CD4-positive, alpha-beta T cell (primary cell): ENCODE measurements at regions of chr16 and their contacts with region 1.

Region 1: GRCh38 chr16:15055141-15056053 is 477 bp downstream of the NTAN1 start:
- DNase-seq: peak in 11 of 14 experiments; percentile 20 to 88 (median 68)
- ATAC-seq: peak; percentile 67
- H3K4me3 ChIP-seq: peak overlapping the region; percentile 98
- H3K4me3 Mint-ChIP-seq: peak overlapping the region; percentile 94
- H3K27ac ChIP-seq: peak overlapping the region in 1 of 2 donors; percentile 38
- H3K27ac Mint-ChIP-seq: peak overlapping the region; percentile 81
- H3K4me1 ChIP-seq: peaks cover 22% of the 10 kb centered on the region
- H3K4me1 Mint-ChIP-seq: peaks cover 24% of the 10 kb centered on the region
- H3K27me3 ChIP-seq: no peaks in the 10 kb centered on the region
- H3K27me3 Mint-ChIP-seq: no peaks in the 10 kb centered on the region
- CTCF ChIP-seq: peak; percentile 25

Region 2: DNA sequence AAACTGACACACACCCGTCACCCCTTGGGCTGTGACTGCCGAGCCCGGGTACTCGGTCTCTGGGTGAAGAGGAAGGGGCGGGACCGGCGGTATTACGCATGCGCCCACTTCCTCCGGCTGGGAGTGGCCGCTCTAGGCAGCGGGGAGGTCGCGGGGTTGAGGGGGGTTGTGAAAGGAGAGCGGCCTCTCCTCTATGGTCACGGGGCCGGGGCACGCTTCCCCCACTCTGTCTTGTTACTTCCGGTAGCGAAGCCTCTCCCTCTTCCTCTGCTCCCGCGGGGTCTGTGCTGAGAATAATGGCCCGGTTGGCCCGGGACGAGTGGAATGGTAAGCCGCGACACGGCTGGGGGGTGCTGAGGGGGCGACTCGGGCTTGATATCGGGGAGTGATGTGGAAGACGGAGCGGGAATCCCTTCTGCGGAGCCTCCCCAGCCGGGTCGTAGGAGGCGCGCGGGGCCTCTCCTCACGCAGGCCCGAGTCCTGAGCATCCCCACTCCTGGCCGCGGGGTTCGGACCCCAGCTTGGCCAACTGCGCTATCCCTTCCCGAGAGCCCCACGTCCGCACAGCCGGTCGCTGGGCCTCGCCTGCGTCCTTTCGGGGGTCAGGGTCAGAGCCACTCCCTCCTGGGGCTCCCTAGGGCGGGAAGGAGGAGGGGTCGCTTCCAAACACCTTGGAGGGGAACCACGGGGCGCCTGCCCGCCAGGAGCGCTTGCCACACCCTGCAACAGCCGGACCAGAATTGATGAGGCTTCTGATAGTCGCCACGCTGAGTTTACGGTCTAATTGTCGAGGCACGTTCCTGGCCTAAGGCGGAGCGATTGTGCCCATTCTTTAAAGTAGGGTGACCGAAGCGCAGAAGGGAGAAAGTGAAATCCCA is 422.5 kb before region 1 on chr16 and contains the start of gene BFAR:
- CTCF ChIA-PET with region 1: no interaction called
- POLR2A ChIA-PET with region 1: no interaction called
- intact Hi-C with region 1: loop called in 1 of 2 experiments (anchors 10 kb)
- DNase-seq: peak; percentile 98 to 100 (median 99)
- ATAC-seq: peak; percentile 70
- H3K4me3 ChIP-seq: peak within 1 kb of the TSS; percentile 98
- H3K4me3 Mint-ChIP-seq: peak within 1 kb of the TSS; percentile 100
- H3K27ac ChIP-seq: peak within 1 kb of the TSS; percentile 82 to 92
- H3K27ac Mint-ChIP-seq: peak within 1 kb of the TSS; percentile 93
- H3K4me1 ChIP-seq: peaks cover 65% of the 10 kb centered on the region
- H3K4me1 Mint-ChIP-seq: peaks cover 64% of the 10 kb centered on the region
- H3K27me3 ChIP-seq: no peaks in the 10 kb centered on the region
- H3K27me3 Mint-ChIP-seq: no peaks in the 10 kb centered on the region
- CTCF ChIP-seq: no peak
- total RNA-seq, gene BFAR: 36.9 to 37.6 TPM

Region 3: GRCh38 chr16:14658063-14658462 is 397.3 kb before region 1 on chr16:
- CTCF ChIA-PET with region 1: no interaction called
- POLR2A ChIA-PET with region 1: no interaction called
- intact Hi-C with region 1: no loop called
- DNase-seq: no peak
- ATAC-seq: no peak
- H3K4me3 ChIP-seq: no peak overlapping the region
- H3K4me3 Mint-ChIP-seq: no peak overlapping the region
- H3K27ac ChIP-seq: no peak overlapping the region
- H3K27ac Mint-ChIP-seq: no peak overlapping the region
- H3K4me1 ChIP-seq: peaks cover 3% of the 10 kb centered on the region
- H3K4me1 Mint-ChIP-seq: no peaks in the 10 kb centered on the region
- H3K27me3 ChIP-seq: no peaks in the 10 kb centered on the region
- H3K27me3 Mint-ChIP-seq: no peaks in the 10 kb centered on the region
- CTCF ChIP-seq: no peak

Region 4: DNA sequence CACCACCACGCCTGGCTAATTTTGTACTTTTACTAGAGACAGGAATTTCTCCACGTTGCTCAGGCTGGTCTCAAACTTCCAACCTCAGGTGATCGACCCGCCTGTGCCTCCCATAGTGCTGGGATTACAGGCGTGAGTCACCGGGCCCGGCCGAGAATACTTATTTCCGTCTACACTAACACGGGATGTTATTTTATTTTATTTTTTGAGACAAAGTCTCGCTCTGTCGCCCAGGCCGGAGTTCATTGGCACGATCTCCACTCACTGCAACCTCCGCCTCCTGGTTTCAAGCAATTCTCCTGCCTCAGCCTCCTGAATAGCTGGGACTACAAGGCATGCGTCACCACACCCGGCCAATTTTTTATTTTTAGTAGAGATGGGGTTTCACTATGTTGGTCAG is 90.1 kb before region 1 on chr16:
- CTCF ChIA-PET with region 1: no interaction called
- POLR2A ChIA-PET with region 1: no interaction called
- intact Hi-C with region 1: loop called in 1 of 2 experiments (anchors 10 kb)
- DNase-seq: no peak
- ATAC-seq: no peak
- H3K4me3 ChIP-seq: no peak overlapping the region
- H3K4me3 Mint-ChIP-seq: no peak overlapping the region
- H3K27ac ChIP-seq: no peak overlapping the region
- H3K27ac Mint-ChIP-seq: no peak overlapping the region
- H3K4me1 ChIP-seq: no peaks in the 10 kb centered on the region
- H3K4me1 Mint-ChIP-seq: no peaks in the 10 kb centered on the region
- H3K27me3 ChIP-seq: peaks cover 0 to 5% of the 10 kb centered on the region in 2 experiments
- H3K27me3 Mint-ChIP-seq: peaks cover 17% of the 10 kb centered on the region
- CTCF ChIP-seq: no peak

Region 5: GRCh38 chr16:15037745-15038144 is 17.7 kb before region 1 on chr16:
- CTCF ChIA-PET with region 1: interaction called, 5 read pairs
- POLR2A ChIA-PET with region 1: interaction called, 4 read pairs
- intact Hi-C with region 1: loop called in 1 of 2 experiments (anchors 2 kb)
- DNase-seq: no peak
- ATAC-seq: no peak
- H3K4me3 ChIP-seq: no peak overlapping the region
- H3K4me3 Mint-ChIP-seq: no peak overlapping the region
- H3K27ac ChIP-seq: no peak overlapping the region
- H3K27ac Mint-ChIP-seq: no peak overlapping the region
- H3K4me1 ChIP-seq: no peaks in the 10 kb centered on the region
- H3K4me1 Mint-ChIP-seq: peaks cover under 1% of the 10 kb centered on the region
- H3K27me3 ChIP-seq: no peaks in the 10 kb centered on the region
- H3K27me3 Mint-ChIP-seq: no peaks in the 10 kb centered on the region
- CTCF ChIP-seq: no peak

Region 6: DNA sequence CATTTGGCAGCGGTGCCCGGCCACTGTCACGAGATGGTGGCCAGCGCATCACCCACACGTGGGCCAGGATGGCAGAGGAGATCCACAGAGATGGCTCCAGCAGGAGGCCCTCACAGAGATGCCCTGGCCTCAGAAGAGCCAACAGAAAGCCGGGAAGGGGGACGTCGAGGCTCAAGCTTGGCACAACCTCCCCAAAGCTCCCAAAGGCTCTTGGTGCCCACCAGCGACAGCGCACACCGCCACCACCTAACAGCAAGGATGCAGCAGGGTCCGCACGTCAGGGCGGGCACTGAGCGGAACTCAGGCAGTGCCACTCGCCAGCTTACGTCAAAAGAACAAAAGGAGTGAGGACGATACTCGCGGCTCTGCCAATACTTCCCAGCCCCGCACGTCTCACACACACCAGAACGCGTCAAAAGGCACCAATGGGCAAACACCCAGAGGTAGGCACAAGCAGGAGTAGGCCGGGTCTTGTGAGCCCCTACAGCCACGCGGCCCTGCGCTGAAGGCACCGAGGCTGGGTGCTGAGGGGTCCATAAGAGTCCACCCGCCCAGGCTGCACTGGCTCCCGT is 90.8 kb after region 1 on chr16:
- CTCF ChIA-PET with region 1: no interaction called
- POLR2A ChIA-PET with region 1: no interaction called
- intact Hi-C with region 1: loop called in 1 of 2 experiments (anchors 10 kb)
- DNase-seq: no peak
- ATAC-seq: no peak
- H3K4me3 ChIP-seq: no peak overlapping the region
- H3K4me3 Mint-ChIP-seq: no peak overlapping the region
- H3K27ac ChIP-seq: no peak overlapping the region
- H3K27ac Mint-ChIP-seq: no peak overlapping the region
- H3K4me1 ChIP-seq: peaks cover 7% of the 10 kb centered on the region
- H3K4me1 Mint-ChIP-seq: no peaks in the 10 kb centered on the region
- H3K27me3 ChIP-seq: no peaks in the 10 kb centered on the region
- H3K27me3 Mint-ChIP-seq: no peaks in the 10 kb centered on the region
- CTCF ChIP-seq: no peak